Lower leg skin (tissue), 4 donors: ENCODE measurements at regions of chr15 and their contacts with region 1.

Region 1: GRCh38 chr15:82999905-83000671 is 11.4 kb downstream of the C15orf40 start:
- DNase-seq: no peak
- H3K4me3 ChIP-seq: no peak overlapping the region
- CTCF ChIP-seq: no peak
- POLR2A ChIP-seq: no peak

Region 2: GRCh38 chr15:82849556-82850512 is 150.3 kb before region 1 on chr15:
- intact Hi-C with region 1: loop called (anchors 10 kb)
- DNase-seq: peak; percentile 69 to 90
- H3K4me3 ChIP-seq: no peak overlapping the region
- CTCF ChIP-seq: peak in 1 of 3 donors; percentile 0
- POLR2A ChIP-seq: no peak